Mammary epithelial cell (primary cell): ENCODE measurements at regions of chr5 and their contacts with region 1.

Region 1: DNA sequence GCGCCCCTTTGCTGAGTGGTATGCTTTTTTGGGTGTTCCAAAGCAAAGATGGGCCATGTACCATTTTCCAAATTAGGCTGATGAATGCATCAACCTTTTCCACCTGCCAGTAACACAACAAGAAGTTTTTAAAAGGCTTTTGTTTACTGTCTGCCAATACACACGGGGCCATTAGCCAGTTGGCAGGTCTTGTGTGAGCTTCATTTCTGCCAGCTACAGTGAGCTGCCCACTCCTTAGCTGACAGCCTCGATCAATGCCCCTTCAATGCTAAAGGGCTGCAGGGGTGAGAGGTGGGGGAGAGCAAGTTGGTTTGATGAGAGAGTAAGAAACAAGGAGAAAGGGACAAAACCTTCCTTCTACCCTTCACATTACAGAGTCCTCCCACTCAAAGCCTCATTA is 128.7 kb downstream of the C5orf15 start:
- DNase-seq: no peak
- H3K4me3 ChIP-seq: no peak overlapping the region
- H3K27ac ChIP-seq: no peak overlapping the region
- H3K4me1 ChIP-seq: no peaks in the 10 kb centered on the region
- H3K27me3 ChIP-seq: peaks cover 19% of the 10 kb centered on the region
- CTCF ChIP-seq: no peak

Region 2: DNA sequence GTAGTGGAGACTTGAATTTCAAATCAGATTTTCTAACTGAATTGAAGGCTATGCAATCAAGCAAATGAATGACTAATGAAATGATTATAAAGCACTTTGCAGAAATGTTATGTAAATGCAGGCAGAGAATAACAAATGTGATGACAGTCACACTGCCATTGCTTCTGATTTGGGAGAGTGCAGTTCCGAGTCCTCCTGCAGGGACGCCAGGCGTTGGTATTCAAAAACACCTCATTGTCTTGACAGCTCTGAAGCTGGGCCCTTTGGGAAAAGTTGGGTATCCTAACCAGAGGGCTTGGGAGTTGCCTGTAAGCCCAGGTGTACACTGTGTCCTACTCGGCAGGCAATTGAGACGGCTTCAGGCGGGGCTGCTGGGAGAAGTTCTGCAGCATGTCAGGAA is 70.8 kb after region 1 on chr5:
- CTCF ChIA-PET with region 1: no interaction called
- dilution Hi-C with region 1: loop called (anchors 5 kb)
- in situ Hi-C with region 1: no loop called
- intact Hi-C with region 1: no loop called
- DNase-seq: no peak
- H3K4me3 ChIP-seq: no peak overlapping the region
- H3K27ac ChIP-seq: no peak overlapping the region
- H3K4me1 ChIP-seq: no peaks in the 10 kb centered on the region
- H3K27me3 ChIP-seq: no peaks in the 10 kb centered on the region
- CTCF ChIP-seq: no peak